ENCODE measurements at regions of chr7 and their contacts with region 1.

Region 1: GRCh38 chr7:54788664-54789063 is 29.7 kb upstream of the SEC61G start:
- DNase-seq: no peak
- H3K4me3 Mint-ChIP-seq: no peak overlapping the region
- H3K27ac Mint-ChIP-seq: no peak overlapping the region
- H3K4me1 Mint-ChIP-seq: peaks cover 5% of the 10 kb centered on the region
- H3K27me3 Mint-ChIP-seq: peaks cover 15% of the 10 kb centered on the region

Region 2: GRCh38 chr7:54773472-54774399 is 14.9 kb before region 1 on chr7:
- intact Hi-C with region 1: loop called (anchors 1 kb)
- DNase-seq: peak; percentile 53
- H3K4me3 Mint-ChIP-seq: peak overlapping the region; percentile 70
- H3K27ac Mint-ChIP-seq: no peak overlapping the region
- H3K4me1 Mint-ChIP-seq: peaks cover 12% of the 10 kb centered on the region
- H3K27me3 Mint-ChIP-seq: peaks cover 27% of the 10 kb centered on the region

Region 3: DNA sequence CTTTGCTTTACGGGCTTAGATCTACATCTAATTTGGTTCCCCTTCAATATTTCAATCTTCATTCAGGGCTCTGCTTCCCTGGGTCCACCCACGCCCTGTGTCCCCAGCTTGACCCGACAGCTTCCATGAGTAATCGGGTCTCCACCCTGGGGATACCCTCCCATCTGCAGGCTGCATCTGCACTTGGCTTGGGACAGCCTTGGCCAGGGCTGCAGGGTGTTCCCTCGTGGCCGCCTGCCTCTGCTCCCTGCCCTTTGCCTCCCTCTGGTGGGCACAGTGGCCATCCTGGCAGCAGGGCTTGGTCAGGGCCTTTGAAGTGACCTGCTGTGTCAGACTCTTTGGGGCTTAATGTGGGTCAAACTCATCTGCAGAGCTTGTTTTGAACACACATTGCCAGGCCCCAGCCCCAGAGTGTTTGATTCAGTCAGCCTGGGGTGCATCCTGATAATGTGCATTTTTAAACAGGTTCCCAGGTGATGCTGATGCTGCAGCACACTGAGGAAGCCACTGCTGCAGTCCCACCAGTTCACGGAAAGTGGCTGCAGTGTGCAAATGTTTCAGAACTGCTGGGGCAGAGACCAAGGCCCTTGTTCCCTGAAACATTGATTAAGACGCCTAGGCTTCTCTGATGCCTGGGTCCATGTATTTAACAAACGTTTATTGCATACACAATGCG is 51.0 kb after region 1 on chr7:
- intact Hi-C with region 1: no loop called
- DNase-seq: no peak
- H3K4me3 Mint-ChIP-seq: no peak overlapping the region
- H3K27ac Mint-ChIP-seq: no peak overlapping the region
- H3K4me1 Mint-ChIP-seq: no peaks in the 10 kb centered on the region
- H3K27me3 Mint-ChIP-seq: peaks cover 5% of the 10 kb centered on the region

Region 4: GRCh38 chr7:55053651-55054571 is 265.2 kb after region 1 on chr7:
- intact Hi-C with region 1: no loop called
- DNase-seq: no peak
- H3K4me3 Mint-ChIP-seq: no peak overlapping the region
- H3K27ac Mint-ChIP-seq: no peak overlapping the region
- H3K4me1 Mint-ChIP-seq: no peaks in the 10 kb centered on the region
- H3K27me3 Mint-ChIP-seq: peaks cover 2% of the 10 kb centered on the region